ENCODE measurements at regions of chr1 and their contacts with region 1.

Region 1: DNA sequence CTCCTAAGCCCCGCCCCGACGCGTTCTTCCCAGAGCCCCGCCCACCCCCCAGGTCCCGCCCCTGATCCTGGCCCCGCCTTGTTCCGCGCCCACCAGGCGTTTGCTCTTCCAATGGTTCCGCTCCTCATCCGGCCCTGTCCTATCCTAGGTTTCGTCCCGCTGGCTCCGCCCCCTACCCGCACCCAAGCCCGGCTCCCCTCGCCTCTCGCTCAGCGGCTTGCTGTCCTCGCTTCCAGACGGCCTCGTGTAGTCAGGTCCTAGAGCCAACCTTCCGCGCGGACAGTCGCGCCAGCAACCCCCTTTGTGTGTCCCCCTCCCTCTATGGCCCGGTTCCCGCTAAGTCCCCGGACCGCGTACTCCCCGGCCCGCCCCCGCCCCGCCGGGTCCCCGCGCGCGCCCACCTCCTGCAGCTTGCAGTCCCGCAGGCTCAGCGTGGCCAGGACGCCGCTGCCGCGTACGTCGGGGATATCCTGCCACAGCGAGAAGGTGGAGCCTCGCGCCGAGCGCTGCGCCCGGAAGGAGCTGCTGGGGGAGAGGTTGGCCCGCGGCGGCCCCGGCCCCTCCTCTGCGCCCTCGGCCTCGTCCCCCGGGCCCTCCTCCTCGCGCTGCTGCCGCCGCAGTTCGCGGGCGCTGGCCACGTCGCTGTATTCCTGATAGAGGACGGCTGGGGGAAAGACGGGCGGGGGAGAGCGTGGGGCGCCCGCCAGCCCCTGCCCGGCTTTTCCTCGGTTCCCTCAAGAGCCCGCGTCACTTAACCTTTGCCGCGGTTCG is 5.7 kb downstream of the ARHGEF19 start:
- DNase-seq: peak; percentile 85 to 95 (median 93)
- ATAC-seq: peak; percentile 94
- H3K4me3 ChIP-seq: peak overlapping the region; percentile 74
- H3K4me3 Mint-ChIP-seq: peak overlapping the region; percentile 83 to 95 (median 90)
- H3K27ac ChIP-seq: peak overlapping the region; percentile 81
- H3K27ac Mint-ChIP-seq: peak overlapping the region; percentile 87 to 98 (median 95)
- H3K4me1 ChIP-seq: peaks cover 9 to 15% of the 10 kb centered on the region in 2 donors
- H3K4me1 Mint-ChIP-seq: peaks cover 7 to 17% (median 13%) of the 10 kb centered on the region in 7 donors
- H3K27me3 ChIP-seq: no peaks in the 10 kb centered on the region
- H3K27me3 Mint-ChIP-seq: no peaks in the 10 kb centered on the region

Region 2: DNA sequence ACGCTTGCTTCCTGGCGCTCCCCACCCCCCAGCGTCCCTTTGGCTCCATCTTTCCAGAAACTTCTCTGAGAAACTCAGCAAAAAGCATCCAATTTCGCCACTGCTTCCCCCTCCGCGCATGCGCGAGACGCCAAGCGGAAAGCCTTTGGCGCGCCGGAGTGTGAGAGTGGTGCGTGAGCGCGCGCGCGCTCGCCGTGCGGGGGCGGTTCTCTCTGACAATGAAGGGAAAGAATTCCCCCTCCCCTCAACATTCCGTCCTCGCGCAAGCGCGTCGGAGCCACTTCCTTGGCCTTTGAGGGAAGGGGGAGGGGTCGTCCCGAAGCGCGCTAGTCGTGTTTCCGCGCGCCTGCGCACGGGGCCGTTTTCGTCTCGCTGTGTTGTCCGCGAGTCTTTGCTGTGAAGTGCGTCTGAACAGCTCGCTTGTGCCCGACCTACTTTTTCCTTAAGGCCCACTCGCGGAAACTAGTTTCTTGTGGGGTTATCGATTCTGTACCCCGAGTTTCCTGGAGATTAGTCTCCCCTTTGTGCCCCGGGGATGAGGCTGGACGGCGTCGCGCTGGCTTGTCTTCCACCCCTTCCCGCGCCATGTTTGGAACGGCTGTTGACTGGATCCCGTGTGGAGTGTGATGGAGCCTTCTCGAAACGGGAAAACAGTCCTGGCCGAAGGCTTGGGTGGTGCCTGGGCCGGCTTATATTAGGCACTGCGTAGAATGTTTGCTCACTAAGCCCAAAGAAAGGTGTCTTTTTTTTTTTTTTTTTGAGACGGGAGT is 370.8 kb before region 1 on chr1:
- CTCF ChIA-PET with region 1: no interaction called
- POLR2A ChIA-PET with region 1: no interaction called
- intact Hi-C with region 1: loop called in 1 of 2 experiments (anchors 1 kb)
- DNase-seq: peak; percentile 96 to 99 (median 98)
- ATAC-seq: peak; percentile 77
- H3K4me3 ChIP-seq: peak overlapping the region; percentile 100
- H3K4me3 Mint-ChIP-seq: peak overlapping the region; percentile 88 to 100 (median 96)
- H3K27ac ChIP-seq: peak overlapping the region; percentile 98
- H3K27ac Mint-ChIP-seq: peak overlapping the region; percentile 98 to 100 (median 99)
- H3K4me1 ChIP-seq: peaks cover 12 to 16% of the 10 kb centered on the region in 2 donors
- H3K4me1 Mint-ChIP-seq: peaks cover 5 to 35% (median 24%) of the 10 kb centered on the region in 7 donors
- H3K27me3 ChIP-seq: no peaks in the 10 kb centered on the region
- H3K27me3 Mint-ChIP-seq: peaks cover 0 to 3% (median 0%) of the 10 kb centered on the region in 5 donors

Region 3: GRCh38 chr1:16167331-16168143 is 39.2 kb before region 1 on chr1:
- CTCF ChIA-PET with region 1: no interaction called
- POLR2A ChIA-PET with region 1: no interaction called
- intact Hi-C with region 1: loop called in 1 of 2 experiments (anchors 1 kb)
- DNase-seq: peak; percentile 57 to 77 (median 72)
- ATAC-seq: peak; percentile 89
- H3K4me3 ChIP-seq: peak overlapping the region; percentile 41
- H3K4me3 Mint-ChIP-seq: peak overlapping the region; percentile 56 to 85 (median 80)
- H3K27ac ChIP-seq: peak overlapping the region; percentile 53
- H3K27ac Mint-ChIP-seq: peak overlapping the region in 5 of 9 donors; percentile 29 to 72 (median 53)
- H3K4me1 ChIP-seq: peaks cover 24 to 39% of the 10 kb centered on the region in 2 donors
- H3K4me1 Mint-ChIP-seq: peaks cover 31 to 73% (median 53%) of the 10 kb centered on the region in 7 donors
- H3K27me3 ChIP-seq: no peaks in the 10 kb centered on the region
- H3K27me3 Mint-ChIP-seq: peaks cover 0 to 59% (median 0%) of the 10 kb centered on the region in 5 donors

Region 4: DNA sequence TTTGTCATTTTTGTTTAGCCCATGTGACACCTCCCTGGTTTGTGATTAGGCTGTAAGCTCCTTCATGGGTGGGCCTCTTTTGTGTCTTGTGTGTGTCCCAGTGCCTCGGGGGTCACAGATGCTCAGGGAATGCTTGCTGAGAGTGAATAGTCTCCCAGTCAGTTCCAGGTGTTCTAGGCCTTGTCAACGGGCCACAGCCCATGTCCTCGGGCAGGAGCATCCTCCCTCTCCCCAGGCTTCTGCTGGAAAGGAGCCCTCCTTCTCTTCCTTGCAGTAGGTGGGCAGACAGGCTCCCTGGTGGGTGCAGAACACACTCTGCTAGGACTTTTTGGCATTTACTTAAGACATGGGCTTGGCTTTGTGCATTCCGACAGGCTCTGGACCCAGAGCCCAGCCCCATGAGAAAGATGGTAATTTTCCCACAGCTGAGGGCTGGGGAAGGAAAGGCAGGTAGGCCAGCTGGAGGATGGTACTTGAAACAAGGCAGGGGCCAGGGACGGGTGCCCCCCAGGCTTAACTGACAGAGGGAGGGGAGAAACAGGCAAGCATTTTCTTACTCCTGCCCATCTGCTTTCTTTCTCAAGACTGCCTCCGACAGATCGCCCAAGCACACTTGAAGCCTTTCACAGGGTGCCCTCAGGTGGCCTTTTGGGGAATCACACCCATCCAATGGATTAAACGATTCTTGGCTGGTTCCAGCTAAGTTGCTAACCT is 37.4 kb after region 1 on chr1:
- CTCF ChIA-PET with region 1: interaction called, 16 read pairs
- POLR2A ChIA-PET with region 1: interaction called, 5 read pairs
- intact Hi-C with region 1: loop called (anchors 1 kb)
- DNase-seq: peak; percentile 38 to 77 (median 68)
- ATAC-seq: peak; percentile 94
- H3K4me3 ChIP-seq: no peak overlapping the region
- H3K4me3 Mint-ChIP-seq: no peak overlapping the region
- H3K27ac ChIP-seq: no peak overlapping the region
- H3K27ac Mint-ChIP-seq: peak overlapping the region in 4 of 9 donors; percentile 21 to 92 (median 65)
- H3K4me1 ChIP-seq: peaks cover 0 to 5% of the 10 kb centered on the region in 2 donors
- H3K4me1 Mint-ChIP-seq: peaks cover 9 to 21% (median 17%) of the 10 kb centered on the region in 7 donors
- H3K27me3 ChIP-seq: no peaks in the 10 kb centered on the region
- H3K27me3 Mint-ChIP-seq: no peaks in the 10 kb centered on the region

Region 5: GRCh38 chr1:16498573-16499413 is 292.1 kb after region 1 on chr1:
- CTCF ChIA-PET with region 1: no interaction called
- POLR2A ChIA-PET with region 1: no interaction called
- intact Hi-C with region 1: loop called in 1 of 2 experiments (anchors 5 kb)
- DNase-seq: peak; percentile 64 to 91 (median 74)
- ATAC-seq: peak; percentile 94
- H3K4me3 ChIP-seq: peak overlapping the region; percentile 83
- H3K4me3 Mint-ChIP-seq: peak overlapping the region; percentile 83 to 95 (median 88)
- H3K27ac ChIP-seq: peak overlapping the region; percentile 56
- H3K27ac Mint-ChIP-seq: peak overlapping the region in 6 of 9 donors; percentile 38 to 85 (median 78)
- H3K4me1 ChIP-seq: no peaks in the 10 kb centered on the region
- H3K4me1 Mint-ChIP-seq: peaks cover 9 to 27% (median 20%) of the 10 kb centered on the region in 7 donors
- H3K27me3 ChIP-seq: no peaks in the 10 kb centered on the region
- H3K27me3 Mint-ChIP-seq: peaks cover 0 to 9% (median 0%) of the 10 kb centered on the region in 5 donors

Region 6: DNA sequence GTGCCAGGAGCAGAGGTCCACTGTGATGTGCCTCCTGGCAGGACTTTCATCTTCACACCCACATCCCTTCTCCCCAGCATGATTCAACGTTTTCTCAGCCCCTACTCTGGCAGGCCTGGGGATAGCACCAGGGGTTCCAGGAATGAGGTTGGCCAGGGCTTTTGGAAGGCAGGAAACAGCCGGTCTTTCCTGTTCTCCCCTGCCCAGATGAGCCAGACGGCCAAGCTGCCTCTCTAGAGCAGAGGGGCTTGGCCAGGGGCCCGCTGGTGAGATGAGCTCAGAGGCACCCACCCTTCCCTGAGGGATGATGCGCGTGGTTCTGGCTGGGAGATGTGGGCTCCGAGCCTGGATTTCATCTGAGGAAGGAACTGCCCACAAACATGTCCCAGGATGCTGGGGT is 778.0 kb after region 1 on chr1:
- CTCF ChIA-PET with region 1: no interaction called
- POLR2A ChIA-PET with region 1: no interaction called
- intact Hi-C with region 1: no loop called
- DNase-seq: no peak
- ATAC-seq: no peak
- H3K4me3 ChIP-seq: no peak overlapping the region
- H3K4me3 Mint-ChIP-seq: no peak overlapping the region
- H3K27ac ChIP-seq: no peak overlapping the region
- H3K27ac Mint-ChIP-seq: no peak overlapping the region
- H3K4me1 ChIP-seq: no peaks in the 10 kb centered on the region
- H3K4me1 Mint-ChIP-seq: peaks cover 6 to 11% (median 10%) of the 10 kb centered on the region in 7 donors
- H3K27me3 ChIP-seq: no peaks in the 10 kb centered on the region
- H3K27me3 Mint-ChIP-seq: peaks cover 18 to 31% (median 21%) of the 10 kb centered on the region in 5 donors

Measured in naive thymus-derived CD4-positive, alpha-beta T cell (primary cell).